ENCODE measurements at regions of chr13 and their contacts with region 1.

Region 1: DNA sequence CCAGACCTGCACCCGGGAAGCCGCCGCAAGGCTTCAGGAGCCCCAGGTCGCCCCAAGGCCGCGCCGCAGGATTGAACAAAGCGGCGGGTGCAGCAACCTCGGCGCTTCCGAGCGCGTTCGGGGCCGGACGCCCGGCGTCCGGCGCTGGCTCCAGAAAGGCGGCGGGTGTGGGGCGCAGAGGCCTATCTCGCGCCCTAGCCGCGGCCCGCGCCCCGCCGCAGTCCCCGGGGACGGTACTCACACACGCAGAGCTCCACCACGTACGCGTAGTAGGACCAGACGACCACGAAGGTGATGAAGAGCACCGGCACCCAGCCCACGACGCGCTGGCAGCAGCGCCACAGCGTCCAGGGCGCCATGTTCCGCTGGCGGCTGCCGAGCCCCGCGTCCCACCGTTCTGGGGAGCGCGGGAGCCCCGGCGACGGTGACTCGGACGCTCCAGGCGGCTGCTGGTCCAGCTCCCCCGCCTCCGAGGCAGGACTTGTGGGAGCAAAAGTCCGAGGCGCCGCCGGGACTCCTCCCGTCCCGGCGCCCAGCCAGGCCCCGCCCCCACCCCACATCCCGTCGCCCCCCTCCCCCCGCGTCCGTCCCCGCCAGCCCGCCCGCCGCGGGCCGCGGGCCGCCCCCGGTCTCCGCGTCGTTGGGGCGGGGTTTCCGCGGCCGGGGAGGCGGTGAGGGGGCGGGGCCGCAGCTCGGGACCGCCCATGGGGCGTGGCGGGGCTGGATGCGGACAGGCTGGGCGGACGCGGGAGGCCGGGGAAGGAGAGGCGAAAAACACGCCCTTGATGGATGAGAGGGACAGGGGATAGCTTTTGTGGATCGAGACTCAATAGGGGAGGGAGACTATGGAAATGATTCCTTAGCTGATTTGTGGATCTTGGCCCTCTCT is at the start of gene ZDHHC20:
- DNase-seq: peak; percentile 82 to 93 (median 86)
- H3K4me3 ChIP-seq: peak within 1 kb of the TSS; percentile 34 to 72
- H3K4me3 Mint-ChIP-seq: peak within 1 kb of the TSS; percentile 92 to 95 (median 94)
- H3K27ac ChIP-seq: peak within 1 kb of the TSS; percentile 86
- H3K27ac Mint-ChIP-seq: peak within 1 kb of the TSS; percentile 84 to 97 (median 94)
- H3K4me1 ChIP-seq: peaks cover 39% of the 10 kb centered on the region
- H3K4me1 Mint-ChIP-seq: peaks cover 30 to 56% (median 42%) of the 10 kb centered on the region in 4 donors
- H3K27me3 ChIP-seq: no peaks in the 10 kb centered on the region
- H3K27me3 Mint-ChIP-seq: no peaks in the 10 kb centered on the region
- total RNA-seq, gene ZDHHC20: 69.5 to 72.3 TPM

Region 2: GRCh38 chr13:21310221-21310620 is 148.8 kb before region 1 on chr13:
- CTCF ChIA-PET with region 1: no interaction called
- POLR2A ChIA-PET with region 1: no interaction called
- intact Hi-C with region 1: no loop called
- DNase-seq: no peak
- H3K4me3 ChIP-seq: no peak overlapping the region
- H3K4me3 Mint-ChIP-seq: no peak overlapping the region
- H3K27ac ChIP-seq: no peak overlapping the region
- H3K27ac Mint-ChIP-seq: no peak overlapping the region
- H3K4me1 ChIP-seq: no peaks in the 10 kb centered on the region
- H3K4me1 Mint-ChIP-seq: no peaks in the 10 kb centered on the region
- H3K27me3 ChIP-seq: no peaks in the 10 kb centered on the region
- H3K27me3 Mint-ChIP-seq: no peaks in the 10 kb centered on the region

Region 3: GRCh38 chr13:21402586-21403228 is 56.4 kb before region 1 on chr13:
- CTCF ChIA-PET with region 1: no interaction called
- POLR2A ChIA-PET with region 1: no interaction called
- intact Hi-C with region 1: loop called (anchors 2 kb)
- DNase-seq: no peak
- H3K4me3 ChIP-seq: no peak overlapping the region
- H3K4me3 Mint-ChIP-seq: no peak overlapping the region
- H3K27ac ChIP-seq: no peak overlapping the region
- H3K27ac Mint-ChIP-seq: peak overlapping the region in 3 of 7 donors; percentile 2 to 67 (median 59)
- H3K4me1 ChIP-seq: peaks cover 16% of the 10 kb centered on the region
- H3K4me1 Mint-ChIP-seq: peaks cover 21 to 43% (median 27%) of the 10 kb centered on the region in 4 donors
- H3K27me3 ChIP-seq: no peaks in the 10 kb centered on the region
- H3K27me3 Mint-ChIP-seq: no peaks in the 10 kb centered on the region

Region 4: GRCh38 chr13:21435710-21436151 is 23.3 kb before region 1 on chr13:
- CTCF ChIA-PET with region 1: interaction called, 3 read pairs
- POLR2A ChIA-PET with region 1: interaction called, 9 read pairs
- intact Hi-C with region 1: loop called (anchors 2 kb)
- DNase-seq: peak; percentile 3 to 59 (median 17)
- H3K4me3 ChIP-seq: no peak overlapping the region
- H3K4me3 Mint-ChIP-seq: peak overlapping the region; percentile 1 to 75 (median 45)
- H3K27ac ChIP-seq: no peak overlapping the region
- H3K27ac Mint-ChIP-seq: peak overlapping the region in 4 of 7 donors; percentile 8 to 84 (median 12)
- H3K4me1 ChIP-seq: peaks cover 23% of the 10 kb centered on the region
- H3K4me1 Mint-ChIP-seq: peaks cover 35 to 56% (median 45%) of the 10 kb centered on the region in 4 donors
- H3K27me3 ChIP-seq: no peaks in the 10 kb centered on the region
- H3K27me3 Mint-ChIP-seq: no peaks in the 10 kb centered on the region

Region 5: DNA sequence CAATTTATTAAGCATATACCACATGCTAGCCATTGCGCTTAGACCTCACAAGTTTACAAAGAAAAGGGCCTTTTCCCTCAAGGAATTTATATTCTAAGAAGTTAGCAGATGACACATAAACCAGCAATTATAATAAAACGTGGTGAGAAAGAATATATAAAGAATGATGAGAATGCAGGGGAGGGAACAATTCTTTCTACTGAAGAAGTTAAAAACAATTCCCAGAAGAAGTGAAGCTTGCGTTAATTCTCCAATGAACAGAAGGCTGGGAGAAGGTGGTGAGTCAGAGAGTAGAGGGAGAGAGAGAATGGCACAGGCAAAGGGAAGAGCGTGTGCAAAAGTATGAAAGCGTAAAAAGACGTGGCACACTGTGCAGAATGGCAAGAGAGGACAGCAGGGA is 69.6 kb after region 1 on chr13:
- CTCF ChIA-PET with region 1: no interaction called
- POLR2A ChIA-PET with region 1: no interaction called
- intact Hi-C with region 1: no loop called
- DNase-seq: no peak
- H3K4me3 ChIP-seq: no peak overlapping the region
- H3K4me3 Mint-ChIP-seq: no peak overlapping the region
- H3K27ac ChIP-seq: no peak overlapping the region
- H3K27ac Mint-ChIP-seq: no peak overlapping the region
- H3K4me1 ChIP-seq: peaks cover 13% of the 10 kb centered on the region
- H3K4me1 Mint-ChIP-seq: peaks cover 10 to 17% (median 17%) of the 10 kb centered on the region in 4 donors
- H3K27me3 ChIP-seq: no peaks in the 10 kb centered on the region
- H3K27me3 Mint-ChIP-seq: no peaks in the 10 kb centered on the region

Region 6: GRCh38 chr13:21557995-21558394 is 98.9 kb after region 1 on chr13:
- CTCF ChIA-PET with region 1: no interaction called
- POLR2A ChIA-PET with region 1: no interaction called
- intact Hi-C with region 1: no loop called
- DNase-seq: peak in 1 of 5 donors; percentile 6
- H3K4me3 ChIP-seq: no peak overlapping the region
- H3K4me3 Mint-ChIP-seq: no peak overlapping the region
- H3K27ac ChIP-seq: no peak overlapping the region
- H3K27ac Mint-ChIP-seq: no peak overlapping the region
- H3K4me1 ChIP-seq: no peaks in the 10 kb centered on the region
- H3K4me1 Mint-ChIP-seq: peaks cover 11 to 24% (median 15%) of the 10 kb centered on the region in 4 donors
- H3K27me3 ChIP-seq: no peaks in the 10 kb centered on the region
- H3K27me3 Mint-ChIP-seq: no peaks in the 10 kb centered on the region

Region 7: DNA sequence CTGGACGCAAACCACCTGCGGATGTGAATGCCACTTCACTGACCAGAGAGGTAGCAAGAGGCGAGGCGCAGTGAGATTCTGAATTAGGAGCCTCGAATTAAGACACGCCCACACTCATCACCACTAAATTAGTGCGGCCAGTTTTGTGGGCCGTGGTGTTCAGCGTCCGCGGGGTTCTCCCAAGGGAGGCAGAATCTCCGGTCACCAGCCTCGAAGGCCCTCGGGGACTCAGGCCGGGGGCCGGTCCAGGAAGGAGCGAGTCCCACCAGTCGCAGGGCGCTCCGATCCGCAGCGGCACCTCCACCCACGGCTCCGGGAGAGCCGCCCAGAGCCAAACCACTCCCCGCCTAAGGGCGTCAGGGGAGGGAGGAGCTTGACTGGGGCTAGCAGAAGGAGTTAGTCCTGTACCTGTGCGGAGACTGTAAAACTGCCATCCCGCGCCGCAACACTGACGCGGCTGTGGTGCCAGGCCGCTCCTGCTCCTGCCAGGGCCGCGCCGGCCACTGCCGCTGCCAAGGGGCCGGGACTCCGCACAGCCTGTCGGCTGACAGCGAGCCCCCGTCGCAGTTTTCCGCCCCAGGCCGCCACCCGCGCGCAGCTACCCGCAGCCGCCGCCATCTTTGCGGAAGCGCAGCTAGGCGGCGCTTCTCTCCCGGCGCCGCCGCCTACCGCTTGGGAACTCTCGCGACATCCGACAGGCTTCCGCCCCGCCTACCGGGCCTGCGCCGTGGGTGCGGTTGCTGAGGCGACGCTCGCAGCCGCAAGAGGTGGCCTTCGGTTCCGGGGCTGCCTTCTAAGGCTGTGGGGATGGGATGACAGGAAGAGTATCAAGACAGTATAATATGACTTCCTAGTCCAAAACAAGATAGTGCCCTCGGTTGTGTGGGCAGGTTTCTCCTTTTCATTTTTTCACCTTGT is 144.7 kb after region 1 on chr13 and contains the start of gene MICU2:
- CTCF ChIA-PET with region 1: interaction called, 3 read pairs
- POLR2A ChIA-PET with region 1: interaction called, 24 read pairs
- intact Hi-C with region 1: loop called (anchors 2 kb)
- DNase-seq: peak; percentile 96 to 97 (median 97)
- H3K4me3 ChIP-seq: peak within 1 kb of the TSS; percentile 78 to 83
- H3K4me3 Mint-ChIP-seq: peak within 1 kb of the TSS; percentile 86 to 97 (median 89)
- H3K27ac ChIP-seq: peak within 1 kb of the TSS; percentile 85
- H3K27ac Mint-ChIP-seq: peak within 1 kb of the TSS; percentile 90 to 97 (median 95)
- H3K4me1 ChIP-seq: peaks cover 36% of the 10 kb centered on the region
- H3K4me1 Mint-ChIP-seq: peaks cover 28 to 58% (median 36%) of the 10 kb centered on the region in 4 donors
- H3K27me3 ChIP-seq: no peaks in the 10 kb centered on the region
- H3K27me3 Mint-ChIP-seq: peaks cover 4% of the 10 kb centered on the region in 2 donors
- total RNA-seq, gene MICU2: 46.0 to 50.3 TPM

Region 8: GRCh38 chr13:21670883-21671619 is 212.0 kb after region 1 on chr13 and contains the start of gene FGF9:
- CTCF ChIA-PET with region 1: no interaction called
- POLR2A ChIA-PET with region 1: no interaction called
- intact Hi-C with region 1: loop called (anchors 5 kb)
- DNase-seq: peak; percentile 83 to 89 (median 87)
- H3K4me3 ChIP-seq: peak within 1 kb of the TSS; percentile 69 to 86
- H3K4me3 Mint-ChIP-seq: peak within 1 kb of the TSS; percentile 89 to 98 (median 92)
- H3K27ac ChIP-seq: peak within 1 kb of the TSS; percentile 19
- H3K27ac Mint-ChIP-seq: peak within 1 kb of the TSS; percentile 65 to 93 (median 89)
- H3K4me1 ChIP-seq: peaks cover 45% of the 10 kb centered on the region
- H3K4me1 Mint-ChIP-seq: peaks cover 30 to 58% (median 40%) of the 10 kb centered on the region in 4 donors
- H3K27me3 ChIP-seq: peaks cover 11% of the 10 kb centered on the region
- H3K27me3 Mint-ChIP-seq: peaks cover 6 to 7% of the 10 kb centered on the region in 2 donors
- total RNA-seq, gene FGF9: 6.5 to 7.3 TPM